ENCODE measurements at regions of chr11 and their contacts with region 1.

Region 1: DNA sequence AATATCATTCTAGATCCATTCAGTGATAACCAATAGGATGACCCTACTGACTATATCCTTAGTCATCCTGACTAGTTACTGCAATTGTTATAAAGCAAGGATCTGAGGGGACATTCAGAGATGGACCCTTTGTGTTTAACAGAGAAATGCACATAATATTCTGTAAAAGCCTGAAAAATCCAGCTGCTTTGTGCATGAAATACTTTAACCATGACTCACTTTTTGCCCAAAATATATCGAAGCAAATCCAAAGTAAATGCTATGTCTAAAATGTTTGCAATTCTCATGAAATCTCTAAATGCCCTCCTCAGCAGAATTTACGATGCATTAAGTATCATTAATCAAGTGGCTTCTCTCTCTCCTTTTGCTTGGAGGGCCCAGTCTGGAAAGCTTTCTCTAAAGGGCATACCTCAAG is 178.8 kb upstream of the MTMR2 start:
- DNase-seq: no peak
- ATAC-seq: no peak
- H3K4me3 ChIP-seq: no peak overlapping the region
- H3K4me3 Mint-ChIP-seq: no peak overlapping the region
- H3K27ac ChIP-seq: no peak overlapping the region
- H3K27ac Mint-ChIP-seq: peak overlapping the region; percentile 52
- H3K4me1 ChIP-seq: peaks cover 4% of the 10 kb centered on the region
- H3K4me1 Mint-ChIP-seq: peaks cover 52% of the 10 kb centered on the region
- H3K27me3 ChIP-seq: no peaks in the 10 kb centered on the region
- H3K27me3 Mint-ChIP-seq: no peaks in the 10 kb centered on the region
- CTCF ChIP-seq: no peak

Region 2: GRCh38 chr11:96012086-96012824 is 90.4 kb before region 1 on chr11:
- CTCF ChIA-PET with region 1: interaction called, 7 read pairs
- POLR2A ChIA-PET with region 1: no interaction called
- intact Hi-C with region 1: loop called in 1 of 2 experiments (anchors 1 kb)
- DNase-seq: peak; percentile 34 to 89 (median 57)
- ATAC-seq: peak; percentile 75
- H3K4me3 ChIP-seq: peak overlapping the region; percentile 24
- H3K4me3 Mint-ChIP-seq: peak overlapping the region; percentile 54
- H3K27ac ChIP-seq: peak overlapping the region; percentile 10 to 82
- H3K27ac Mint-ChIP-seq: no peak overlapping the region
- H3K4me1 ChIP-seq: peaks cover 33% of the 10 kb centered on the region
- H3K4me1 Mint-ChIP-seq: peaks cover 21% of the 10 kb centered on the region
- H3K27me3 ChIP-seq: no peaks in the 10 kb centered on the region
- H3K27me3 Mint-ChIP-seq: no peaks in the 10 kb centered on the region
- CTCF ChIP-seq: peak; percentile 39

Region 3: GRCh38 chr11:96054870-96055705 is 47.6 kb before region 1 on chr11:
- CTCF ChIA-PET with region 1: interaction called, 3 read pairs
- POLR2A ChIA-PET with region 1: interaction called, 3 read pairs
- intact Hi-C with region 1: loop called in 1 of 2 experiments (anchors 5 kb)
- DNase-seq: peak in 3 of 14 experiments; percentile 55 to 57 (median 57)
- ATAC-seq: peak; percentile 76
- H3K4me3 ChIP-seq: no peak overlapping the region
- H3K4me3 Mint-ChIP-seq: no peak overlapping the region
- H3K27ac ChIP-seq: no peak overlapping the region
- H3K27ac Mint-ChIP-seq: peak overlapping the region; percentile 26
- H3K4me1 ChIP-seq: peaks cover 2% of the 10 kb centered on the region
- H3K4me1 Mint-ChIP-seq: peaks cover 83% of the 10 kb centered on the region
- H3K27me3 ChIP-seq: no peaks in the 10 kb centered on the region
- H3K27me3 Mint-ChIP-seq: no peaks in the 10 kb centered on the region
- CTCF ChIP-seq: peak; percentile 65

Region 4: DNA sequence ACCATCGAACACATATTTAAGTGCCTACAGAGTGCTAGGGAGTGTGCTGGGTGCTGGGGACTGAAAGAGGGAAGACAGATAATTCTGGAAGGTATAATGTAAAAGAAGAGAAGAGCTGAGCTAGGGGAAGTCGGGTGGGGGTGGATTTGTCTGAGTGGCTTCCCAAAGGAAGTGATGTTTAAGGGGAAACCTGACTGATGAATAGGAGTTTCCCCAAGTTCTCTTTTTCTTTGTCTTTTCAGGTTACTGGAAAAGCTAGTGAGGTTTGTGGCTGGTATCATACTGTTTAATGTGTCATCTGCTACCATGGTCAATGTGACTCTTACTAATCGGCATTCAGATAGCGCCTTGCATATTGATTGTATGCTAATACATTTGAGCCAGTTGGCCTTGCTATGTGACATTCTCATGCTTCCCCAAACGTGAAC is 27.1 kb before region 1 on chr11:
- CTCF ChIA-PET with region 1: no interaction called
- POLR2A ChIA-PET with region 1: no interaction called
- intact Hi-C with region 1: no loop called
- DNase-seq: peak in 2 of 14 experiments; percentile 31 to 51
- ATAC-seq: no peak
- H3K4me3 ChIP-seq: no peak overlapping the region
- H3K4me3 Mint-ChIP-seq: peak overlapping the region; percentile 11
- H3K27ac ChIP-seq: no peak overlapping the region
- H3K27ac Mint-ChIP-seq: peak overlapping the region; percentile 65
- H3K4me1 ChIP-seq: peaks cover 12% of the 10 kb centered on the region
- H3K4me1 Mint-ChIP-seq: peaks cover 68% of the 10 kb centered on the region
- H3K27me3 ChIP-seq: no peaks in the 10 kb centered on the region
- H3K27me3 Mint-ChIP-seq: no peaks in the 10 kb centered on the region
- CTCF ChIP-seq: no peak

Region 5: GRCh38 chr11:96173422-96173821 is 70.8 kb after region 1 on chr11:
- CTCF ChIA-PET with region 1: no interaction called
- POLR2A ChIA-PET with region 1: no interaction called
- intact Hi-C with region 1: loop called in 1 of 2 experiments (anchors 5 kb)
- DNase-seq: no peak
- ATAC-seq: no peak
- H3K4me3 ChIP-seq: no peak overlapping the region
- H3K4me3 Mint-ChIP-seq: no peak overlapping the region
- H3K27ac ChIP-seq: no peak overlapping the region
- H3K27ac Mint-ChIP-seq: peak overlapping the region; percentile 59
- H3K4me1 ChIP-seq: peaks cover 26% of the 10 kb centered on the region
- H3K4me1 Mint-ChIP-seq: peaks cover 91% of the 10 kb centered on the region
- H3K27me3 ChIP-seq: no peaks in the 10 kb centered on the region
- H3K27me3 Mint-ChIP-seq: no peaks in the 10 kb centered on the region
- CTCF ChIP-seq: no peak

Region 6: DNA sequence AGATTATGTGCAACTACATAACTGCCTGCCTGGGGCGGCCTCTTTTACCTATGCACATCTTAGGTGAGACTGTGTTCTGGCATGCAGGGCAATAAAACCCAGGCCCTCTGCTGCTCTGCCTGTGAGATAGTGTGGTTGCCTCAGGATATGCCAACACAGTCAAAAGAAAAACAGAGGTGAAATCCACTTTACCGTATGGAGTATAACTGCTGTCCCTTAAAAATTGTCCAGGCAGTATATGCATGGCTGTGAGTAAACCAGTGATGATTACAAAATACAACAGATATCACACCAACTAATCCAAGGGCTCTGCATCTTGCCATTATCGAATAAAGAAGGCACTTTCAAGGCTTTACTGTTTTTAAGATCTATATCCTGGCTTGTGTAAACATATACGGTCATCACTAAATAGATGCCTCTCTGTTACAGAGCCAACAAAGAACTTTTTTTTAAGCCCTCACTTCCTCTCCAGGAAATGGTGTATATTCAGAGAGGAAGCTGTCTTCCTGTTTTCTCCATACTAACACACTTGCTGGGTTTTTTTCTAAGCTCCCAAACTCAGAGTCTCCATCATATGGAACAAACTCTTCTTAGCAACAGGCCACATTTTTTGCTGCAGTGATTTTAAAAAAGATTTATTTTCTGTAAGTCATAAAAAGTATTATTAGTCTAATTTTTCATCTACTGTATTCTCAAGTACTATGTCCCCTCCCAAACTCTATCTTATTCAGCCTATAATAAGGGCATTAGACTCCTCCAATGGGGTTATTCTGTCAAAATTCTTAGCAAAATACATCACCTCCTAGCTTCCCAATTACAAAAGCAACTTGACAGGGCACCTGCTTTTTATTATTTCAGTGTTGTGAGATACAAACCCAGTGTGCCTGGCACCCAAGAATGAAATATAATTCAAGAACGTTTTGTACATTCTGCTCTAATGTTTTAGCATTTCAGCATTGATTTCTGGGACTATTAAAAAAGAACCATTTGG is 105.1 kb after region 1 on chr11:
- CTCF ChIA-PET with region 1: no interaction called
- POLR2A ChIA-PET with region 1: no interaction called
- intact Hi-C with region 1: loop called in 1 of 2 experiments (anchors 5 kb)
- DNase-seq: peak in 10 of 14 experiments; percentile 12 to 84 (median 32)
- ATAC-seq: peak; percentile 68
- H3K4me3 ChIP-seq: peak overlapping the region; percentile 22
- H3K4me3 Mint-ChIP-seq: peak overlapping the region; percentile 72
- H3K27ac ChIP-seq: peak overlapping the region; percentile 62 to 78
- H3K27ac Mint-ChIP-seq: peak overlapping the region; percentile 94
- H3K4me1 ChIP-seq: peaks cover 57% of the 10 kb centered on the region
- H3K4me1 Mint-ChIP-seq: peaks cover 86% of the 10 kb centered on the region
- H3K27me3 ChIP-seq: no peaks in the 10 kb centered on the region
- H3K27me3 Mint-ChIP-seq: no peaks in the 10 kb centered on the region
- CTCF ChIP-seq: no peak

Measured in CD4-positive, alpha-beta T cell (primary cell).